Mammary epithelial cell (primary cell): ENCODE measurements at regions of chr14 and their contacts with region 1.

Region 1: GRCh38 chr14:54366736-54367735 is 29.8 kb upstream of the CDKN3 start:
- DNase-seq: peak; percentile 44
- H3K4me3 ChIP-seq: no peak overlapping the region
- H3K27ac ChIP-seq: no peak overlapping the region
- H3K4me1 ChIP-seq: peaks cover 9% of the 10 kb centered on the region
- H3K27me3 ChIP-seq: no peaks in the 10 kb centered on the region
- CTCF ChIP-seq: peak; percentile 54 to 69

Region 2: GRCh38 chr14:53881161-53881871 is 485.7 kb before region 1 on chr14:
- CTCF ChIA-PET with region 1: no interaction called
- dilution Hi-C with region 1: no loop called
- in situ Hi-C with region 1: no loop called
- intact Hi-C with region 1: no loop called
- DNase-seq: no peak
- H3K4me3 ChIP-seq: no peak overlapping the region
- H3K27ac ChIP-seq: no peak overlapping the region
- H3K4me1 ChIP-seq: no peaks in the 10 kb centered on the region
- H3K27me3 ChIP-seq: peaks cover 4% of the 10 kb centered on the region
- CTCF ChIP-seq: no peak

Region 3: DNA sequence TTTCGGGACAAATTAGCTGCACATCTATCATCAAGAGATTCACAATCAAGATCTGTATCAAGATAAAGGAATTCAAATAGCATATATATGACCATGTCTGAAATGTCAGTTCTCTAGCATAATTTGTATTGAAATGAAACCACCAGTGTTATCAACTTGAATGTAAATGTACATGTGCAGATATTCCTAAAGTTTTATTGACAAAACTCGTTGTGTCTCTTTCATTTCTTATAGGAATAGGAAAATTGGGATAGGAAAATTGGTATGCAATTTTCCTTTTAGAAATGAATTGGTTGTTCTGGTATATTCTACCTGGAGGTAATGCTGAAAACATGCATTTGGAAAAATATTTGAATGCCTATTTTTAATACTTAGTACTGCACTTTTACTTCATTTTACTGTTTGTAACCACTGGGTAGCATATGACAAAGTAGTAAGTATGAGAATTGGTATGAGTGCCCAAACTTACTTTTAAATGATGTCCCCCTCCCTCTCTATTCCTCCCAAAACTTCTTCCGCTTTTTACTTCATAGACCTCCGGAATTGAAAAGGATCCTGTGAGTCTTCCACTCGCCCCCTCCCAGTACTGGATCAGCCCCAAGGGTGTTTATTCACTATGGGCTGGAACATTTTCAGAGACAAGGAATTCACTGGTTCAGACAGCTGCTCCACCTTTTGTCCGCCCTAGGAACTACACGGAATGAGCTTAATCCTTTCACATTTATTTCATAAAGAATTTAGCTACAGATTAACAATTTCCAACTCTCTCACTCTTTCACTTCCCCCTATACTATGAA is 53.2 kb after region 1 on chr14:
- CTCF ChIA-PET with region 1: interaction called, 6 read pairs
- dilution Hi-C with region 1: no loop called
- in situ Hi-C with region 1: no loop called
- intact Hi-C with region 1: loop called (anchors 1 kb)
- DNase-seq: peak; percentile 34
- H3K4me3 ChIP-seq: no peak overlapping the region
- H3K27ac ChIP-seq: no peak overlapping the region
- H3K4me1 ChIP-seq: no peaks in the 10 kb centered on the region
- H3K27me3 ChIP-seq: no peaks in the 10 kb centered on the region
- CTCF ChIP-seq: peak; percentile 57 to 69

Region 4: GRCh38 chr14:54440873-54441868 is 74.1 kb after region 1 on chr14 and contains the start of gene CNIH1:
- CTCF ChIA-PET with region 1: no interaction called
- dilution Hi-C with region 1: no loop called
- in situ Hi-C with region 1: no loop called
- intact Hi-C with region 1: loop called (anchors 5 kb)
- DNase-seq: peak; percentile 91
- H3K4me3 ChIP-seq: peak within 1 kb of the TSS; percentile 65 to 78 (median 76)
- H3K27ac ChIP-seq: peak within 1 kb of the TSS; percentile 90
- H3K4me1 ChIP-seq: peaks cover 29% of the 10 kb centered on the region
- H3K27me3 ChIP-seq: no peaks in the 10 kb centered on the region
- CTCF ChIP-seq: peak; percentile 85 to 92
- total RNA-seq, gene CNIH1: 184 to 196 TPM

Region 5: DNA sequence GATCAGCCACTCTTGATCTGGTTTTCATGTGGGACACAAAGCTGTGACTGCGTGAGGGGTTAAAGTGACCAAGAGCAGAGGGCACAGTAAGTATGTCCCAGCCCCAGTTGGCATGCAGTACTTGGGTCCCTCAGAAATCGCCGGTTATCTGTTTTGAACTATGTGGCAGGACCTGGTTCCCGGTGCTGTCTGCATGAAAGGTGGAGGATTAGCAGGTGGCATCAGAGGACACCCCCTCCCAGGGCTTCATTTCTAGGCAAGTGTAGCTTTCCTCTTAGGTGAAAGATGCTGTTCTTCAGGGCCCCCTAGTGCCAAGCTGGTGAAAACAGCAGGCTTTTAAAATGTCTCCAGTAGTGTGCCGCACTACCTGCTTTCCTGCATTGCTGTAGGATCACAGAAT is 987.5 kb after region 1 on chr14:
- CTCF ChIA-PET with region 1: no interaction called
- dilution Hi-C with region 1: no loop called
- in situ Hi-C with region 1: no loop called
- intact Hi-C with region 1: no loop called
- DNase-seq: peak; percentile 45
- H3K4me3 ChIP-seq: no peak overlapping the region
- H3K27ac ChIP-seq: no peak overlapping the region
- H3K4me1 ChIP-seq: peaks cover 8% of the 10 kb centered on the region
- H3K27me3 ChIP-seq: no peaks in the 10 kb centered on the region
- CTCF ChIP-seq: peak; percentile 55 to 76